ENCODE measurements at regions of chr7 and their contacts with region 1.

Region 1: DNA sequence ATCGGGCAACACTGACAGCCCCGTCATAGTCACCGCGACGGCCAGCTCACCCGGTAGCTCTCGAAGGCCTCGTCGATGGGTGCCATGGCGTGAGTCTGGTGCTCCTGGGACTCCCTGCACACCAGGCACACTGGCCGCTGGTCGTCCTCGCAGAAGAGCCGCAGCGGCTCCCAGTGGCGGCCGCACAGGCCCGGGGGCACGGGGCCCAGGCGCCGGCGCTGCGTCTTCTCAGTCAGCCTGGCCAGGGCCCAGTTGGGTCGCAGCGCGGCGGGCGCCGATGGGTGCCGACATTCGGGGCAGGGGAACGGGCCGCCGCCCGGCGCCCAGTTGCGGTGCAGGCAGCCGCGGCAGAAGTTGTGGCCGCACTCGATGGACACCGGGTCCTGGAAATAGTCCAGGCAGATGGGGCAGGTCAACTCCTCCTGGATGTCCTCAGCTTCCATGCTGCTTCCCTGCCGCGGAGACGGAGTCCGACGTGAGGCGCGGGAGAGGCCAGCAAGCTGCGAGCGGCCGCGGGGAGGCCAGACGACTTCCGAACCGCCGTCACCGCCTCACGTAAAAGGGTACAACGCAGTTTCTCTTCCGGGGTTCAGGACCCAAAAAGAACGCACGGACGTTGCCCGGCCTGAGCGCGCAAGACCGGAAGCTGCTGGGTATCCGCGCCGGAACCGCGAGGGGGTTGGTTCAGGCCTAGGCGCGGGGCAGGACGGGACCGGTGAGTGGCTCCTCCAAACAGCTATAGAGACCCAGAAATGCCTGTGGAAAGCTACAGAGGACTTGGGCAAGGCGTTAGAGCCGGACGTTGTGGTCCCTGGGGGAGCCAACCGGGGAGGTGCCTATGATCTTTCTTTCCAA is at the start of gene TRIM4:
- DNase-seq: peak; percentile 95
- ATAC-seq: peak; percentile 99 to 100
- total RNA-seq, gene TRIM4: 9.6 to 11.1 TPM

Region 2: DNA sequence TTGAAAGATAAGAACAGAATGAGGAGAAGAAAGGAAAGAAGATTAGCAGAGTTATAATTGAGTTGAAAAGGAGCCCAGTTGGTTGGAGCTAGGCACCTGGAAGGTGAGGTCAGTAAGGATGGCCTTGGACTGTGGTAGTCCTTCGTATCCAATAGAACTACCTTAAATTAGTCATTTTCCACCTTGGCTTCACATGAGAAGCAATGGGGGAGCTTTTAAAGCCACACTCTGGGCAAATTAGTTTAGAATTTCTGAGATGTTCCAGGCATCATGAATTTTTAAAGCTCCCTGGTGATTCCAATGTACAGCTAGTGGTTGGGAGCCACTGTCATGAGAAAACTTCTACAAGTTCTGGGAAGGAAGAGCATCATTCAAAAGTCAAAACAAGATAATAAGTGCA is 212.1 kb before region 1 on chr7:
- intact Hi-C with region 1: no loop called
- DNase-seq: no peak
- ATAC-seq: no peak

Region 3: GRCh38 chr7:99860281-99861127 is 58.7 kb before region 1 on chr7:
- intact Hi-C with region 1: no loop called
- DNase-seq: peak; percentile 55
- ATAC-seq: peak; percentile 72 to 99

Region 4: DNA sequence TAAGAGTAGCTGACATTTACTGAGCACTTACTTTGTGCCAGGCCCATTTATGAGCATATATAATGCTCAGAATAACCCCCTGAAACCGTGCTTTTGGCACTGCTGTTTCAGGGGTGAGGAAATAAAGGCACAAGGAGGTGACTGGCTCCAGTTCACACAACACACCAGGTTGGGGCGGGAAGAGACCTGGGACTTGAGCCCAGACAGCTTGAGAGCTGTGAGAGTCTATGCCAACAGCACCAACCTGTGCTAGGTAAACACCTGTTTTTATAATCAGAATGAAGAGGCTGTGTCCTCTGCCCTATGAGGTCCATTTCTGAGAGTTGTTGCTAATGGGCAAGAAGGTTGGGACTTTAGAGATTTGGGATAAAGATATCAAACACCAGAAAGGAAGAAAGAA is 65.4 kb after region 1 on chr7:
- intact Hi-C with region 1: loop called in 1 of 2 experiments (anchors 10 kb)
- DNase-seq: no peak
- ATAC-seq: no peak